MCF 10A (cell line): ENCODE measurements at regions of chr14 and their contacts with region 1.

Region 1: GRCh38 chr14:64636208-64636979 is 67.8 kb upstream of the PLEKHG3 start:
- DNase-seq: peak; percentile 68
- H3K4me3 Mint-ChIP-seq: no peak overlapping the region
- H3K27ac Mint-ChIP-seq: no peak overlapping the region
- H3K4me1 Mint-ChIP-seq: peaks cover 17% of the 10 kb centered on the region
- H3K27me3 Mint-ChIP-seq: no peaks in the 10 kb centered on the region
- CTCF ChIP-seq: peak; percentile 70

Region 2: GRCh38 chr14:64503478-64504309 is 132.7 kb before region 1 on chr14 and contains the start of gene ZBTB25:
- CTCF ChIA-PET with region 1: interaction called, 10 read pairs
- POLR2A ChIA-PET with region 1: interaction called, 35 read pairs
- intact Hi-C with region 1: loop called (anchors 2 kb)
- DNase-seq: peak; percentile 90
- H3K4me3 Mint-ChIP-seq: peak within 1 kb of the TSS; percentile 83
- H3K27ac Mint-ChIP-seq: peak within 1 kb of the TSS; percentile 98
- H3K4me1 Mint-ChIP-seq: peaks cover 51% of the 10 kb centered on the region
- H3K27me3 Mint-ChIP-seq: no peaks in the 10 kb centered on the region
- CTCF ChIP-seq: no peak
- total RNA-seq, gene ZBTB25: 11.7 and 15.3 TPM in 2 replicates

Region 3: GRCh38 chr14:64540208-64541157 is 95.9 kb before region 1 on chr14 and contains the start of gene HSPA2:
- CTCF ChIA-PET with region 1: interaction called, 53 read pairs
- POLR2A ChIA-PET with region 1: interaction called, 20 read pairs
- intact Hi-C with region 1: loop called (anchors 1 kb)
- DNase-seq: peak; percentile 99
- H3K4me3 Mint-ChIP-seq: peak within 1 kb of the TSS; percentile 80
- H3K27ac Mint-ChIP-seq: peak within 1 kb of the TSS; percentile 74
- H3K4me1 Mint-ChIP-seq: peaks cover 12% of the 10 kb centered on the region
- H3K27me3 Mint-ChIP-seq: no peaks in the 10 kb centered on the region
- CTCF ChIP-seq: peak; percentile 67
- total RNA-seq, gene HSPA2: 0.51 and 0.56 TPM in 2 replicates

Region 4: DNA sequence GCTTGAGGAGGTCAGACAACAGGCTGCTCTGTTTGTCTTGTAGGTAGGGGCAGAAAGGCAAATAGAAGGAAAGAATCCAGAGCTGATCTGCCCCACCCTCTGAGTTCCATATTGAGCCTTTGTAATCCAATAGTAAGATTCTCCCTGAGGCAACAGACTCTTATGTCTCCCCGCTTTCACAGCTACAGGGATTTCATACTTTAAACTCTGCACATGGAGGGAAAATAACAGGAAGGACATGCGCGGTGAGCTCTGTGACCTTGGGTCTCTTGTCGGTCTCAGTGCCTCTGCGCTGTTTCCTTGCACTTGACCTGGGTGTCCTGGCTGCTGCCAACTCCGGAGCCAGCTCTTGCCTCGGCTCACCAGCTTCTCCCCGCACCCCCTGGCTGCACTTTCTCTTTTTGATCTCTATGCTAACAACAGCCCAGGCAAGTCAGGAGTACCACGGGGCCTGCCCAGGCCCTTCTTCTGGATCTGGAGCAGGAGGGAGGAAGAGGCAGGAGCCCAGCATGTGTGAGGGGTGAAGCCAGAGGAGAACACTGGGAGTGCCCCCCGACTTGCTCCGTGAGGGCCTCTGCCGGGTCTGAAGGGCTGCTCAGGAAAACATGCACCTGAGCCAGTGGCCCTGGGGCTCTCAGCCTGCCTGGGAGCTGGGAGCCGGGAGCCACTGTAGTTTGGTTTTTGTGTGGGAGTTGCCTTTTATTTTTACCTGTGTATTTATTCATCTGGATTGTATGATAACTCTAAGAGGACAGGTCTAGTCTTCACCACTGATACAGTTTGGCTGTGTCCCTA is 10.7 kb before region 1 on chr14:
- CTCF ChIA-PET with region 1: interaction called, 24 read pairs
- POLR2A ChIA-PET with region 1: interaction called, 3 read pairs
- intact Hi-C with region 1: no loop called
- DNase-seq: no peak
- H3K4me3 Mint-ChIP-seq: no peak overlapping the region
- H3K27ac Mint-ChIP-seq: no peak overlapping the region
- H3K4me1 Mint-ChIP-seq: peaks cover 10% of the 10 kb centered on the region
- H3K27me3 Mint-ChIP-seq: no peaks in the 10 kb centered on the region
- CTCF ChIP-seq: no peak

Region 5: DNA sequence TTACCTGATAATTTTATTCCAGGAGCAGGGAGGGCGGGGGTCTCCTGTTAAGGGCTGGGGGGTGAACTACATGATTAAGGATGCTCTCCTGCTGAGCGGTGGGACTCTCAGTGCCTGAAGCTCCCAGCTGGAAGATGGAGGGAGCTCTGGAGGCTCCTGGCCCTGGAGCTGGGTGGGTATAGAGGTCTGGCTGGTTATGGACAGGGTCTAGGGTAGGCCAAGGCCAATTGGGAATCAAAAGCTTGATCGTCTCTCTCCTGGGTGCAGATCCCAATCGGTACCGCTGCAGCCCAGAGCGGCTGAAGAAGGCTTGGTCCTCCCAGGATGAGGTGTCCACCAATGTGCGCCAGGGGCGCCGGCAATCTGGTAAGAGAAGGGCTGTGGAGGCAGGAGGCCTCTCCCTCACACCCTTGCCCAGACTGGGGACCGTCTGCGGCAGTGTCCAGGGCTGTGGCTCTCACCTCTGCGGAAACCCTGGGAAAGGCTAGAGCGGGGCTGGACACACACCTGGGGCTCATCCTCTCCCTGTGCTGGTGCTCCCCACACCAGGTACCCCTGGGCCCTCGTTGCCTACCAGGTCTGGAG is 96.2 kb after region 1 on chr14:
- CTCF ChIA-PET with region 1: no interaction called
- POLR2A ChIA-PET with region 1: no interaction called
- intact Hi-C with region 1: no loop called
- DNase-seq: no peak
- H3K4me3 Mint-ChIP-seq: no peak overlapping the region
- H3K27ac Mint-ChIP-seq: no peak overlapping the region
- H3K4me1 Mint-ChIP-seq: peaks cover 6% of the 10 kb centered on the region
- H3K27me3 Mint-ChIP-seq: no peaks in the 10 kb centered on the region
- CTCF ChIP-seq: no peak

Region 6: DNA sequence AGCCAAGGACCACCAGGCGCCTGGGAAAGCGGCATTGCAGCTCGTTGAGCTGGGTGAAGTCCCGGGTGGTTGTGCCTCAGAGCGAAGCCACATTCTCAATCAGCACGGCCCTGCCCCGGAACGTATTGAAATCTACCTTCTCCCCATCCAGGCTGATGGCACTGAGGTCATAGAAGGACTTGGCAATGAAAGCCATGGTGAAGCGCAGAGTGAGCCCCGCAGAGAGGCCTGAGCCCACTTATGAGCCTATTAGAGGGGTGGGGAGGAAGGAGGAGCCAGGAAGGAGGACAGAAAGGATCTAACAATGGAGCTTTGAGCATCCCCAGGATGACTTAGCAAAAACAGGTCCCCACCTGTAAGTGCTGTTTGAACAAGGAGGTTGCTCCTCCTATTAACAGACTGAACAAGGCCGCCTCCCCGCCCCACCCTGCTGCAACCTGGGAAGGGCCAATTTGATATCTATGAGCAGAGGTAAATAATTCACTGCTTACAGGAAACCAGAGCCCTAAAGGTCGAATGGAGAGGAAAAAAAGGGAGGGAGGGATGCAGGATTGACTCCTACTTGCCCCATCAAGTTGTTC is 306.2 kb after region 1 on chr14 and contains the start of gene GPX2:
- CTCF ChIA-PET with region 1: no interaction called
- POLR2A ChIA-PET with region 1: no interaction called
- intact Hi-C with region 1: no loop called
- DNase-seq: no peak
- H3K4me3 Mint-ChIP-seq: no peak within 1 kb of the TSS
- H3K27ac Mint-ChIP-seq: peak within 1 kb of the TSS; percentile 22
- H3K4me1 Mint-ChIP-seq: no peaks in the 10 kb centered on the region
- H3K27me3 Mint-ChIP-seq: no peaks in the 10 kb centered on the region
- CTCF ChIP-seq: no peak
- total RNA-seq, gene GPX2: not detected in 2 replicates

Region 7: GRCh38 chr14:64986578-64987571 is 350.5 kb after region 1 on chr14 and contains the start of gene FNTB:
- CTCF ChIA-PET with region 1: no interaction called
- POLR2A ChIA-PET with region 1: no interaction called
- intact Hi-C with region 1: no loop called
- DNase-seq: peak; percentile 97
- H3K4me3 Mint-ChIP-seq: peak within 1 kb of the TSS; percentile 79
- H3K27ac Mint-ChIP-seq: peak within 1 kb of the TSS; percentile 76
- H3K4me1 Mint-ChIP-seq: peaks cover 10% of the 10 kb centered on the region
- H3K27me3 Mint-ChIP-seq: peaks cover 12% of the 10 kb centered on the region
- CTCF ChIP-seq: peak; percentile 45
- total RNA-seq, gene FNTB: 12.2 and 13.1 TPM in 2 replicates

Region 8: GRCh38 chr14:65501328-65501727 is 864.9 kb after region 1 on chr14:
- CTCF ChIA-PET with region 1: no interaction called
- POLR2A ChIA-PET with region 1: no interaction called
- intact Hi-C with region 1: no loop called
- DNase-seq: no peak
- H3K4me3 Mint-ChIP-seq: no peak overlapping the region
- H3K27ac Mint-ChIP-seq: no peak overlapping the region
- H3K4me1 Mint-ChIP-seq: no peaks in the 10 kb centered on the region
- H3K27me3 Mint-ChIP-seq: no peaks in the 10 kb centered on the region
- CTCF ChIP-seq: no peak